ENCODE measurements at regions of chr10 and their contacts with region 1.

Region 1: DNA sequence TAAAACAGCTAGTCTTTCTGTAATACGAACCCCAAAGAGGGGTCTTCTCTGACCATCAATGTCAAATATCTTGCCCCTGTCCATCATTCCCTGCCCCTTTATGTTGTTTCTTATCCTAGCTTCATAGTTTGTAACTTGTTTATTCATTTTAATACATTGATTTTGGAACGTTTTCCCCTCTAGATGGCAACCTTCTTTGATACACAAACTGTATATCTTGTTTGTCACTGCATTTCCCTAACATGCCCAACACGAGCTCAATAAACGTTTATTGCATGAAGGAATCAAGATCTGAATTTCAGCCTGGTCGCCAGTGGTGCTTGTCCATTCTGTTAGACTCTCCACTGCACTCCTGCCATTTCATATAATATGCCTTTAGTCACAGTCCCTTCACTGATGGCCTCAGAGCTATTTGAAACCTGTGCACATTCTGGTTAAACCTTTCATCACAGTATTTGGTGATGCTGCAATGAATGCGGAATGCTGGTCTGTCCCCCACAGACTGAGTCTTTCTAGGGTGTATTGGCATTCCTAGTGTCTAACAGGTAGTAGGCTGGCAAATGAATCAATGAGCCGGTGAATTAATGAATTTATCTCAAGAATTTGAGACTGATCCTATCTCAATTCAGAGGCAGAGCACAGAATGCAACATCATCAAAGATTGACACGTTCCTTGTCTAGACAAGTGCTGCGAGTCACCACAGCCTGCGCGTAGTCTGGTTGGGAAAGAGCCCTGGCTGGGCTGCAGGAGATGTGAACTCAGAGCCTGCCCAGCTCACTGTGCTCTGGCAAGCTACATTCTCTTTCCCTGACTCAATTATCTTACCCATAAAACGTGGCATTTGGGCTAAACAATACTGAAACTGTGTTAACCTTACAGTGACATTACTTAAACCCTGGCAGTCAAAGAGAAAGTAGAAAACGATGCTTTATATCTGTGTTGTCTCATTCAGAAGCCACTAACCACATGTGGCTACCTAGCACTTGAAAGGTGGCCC is 55.2 kb upstream of the FRMD4A start:
- DNase-seq: peak; percentile 67
- H3K4me3 Mint-ChIP-seq: no peak overlapping the region
- H3K27ac Mint-ChIP-seq: no peak overlapping the region
- H3K4me1 Mint-ChIP-seq: peaks cover 80% of the 10 kb centered on the region
- H3K27me3 Mint-ChIP-seq: peaks cover 3% of the 10 kb centered on the region

Region 2: DNA sequence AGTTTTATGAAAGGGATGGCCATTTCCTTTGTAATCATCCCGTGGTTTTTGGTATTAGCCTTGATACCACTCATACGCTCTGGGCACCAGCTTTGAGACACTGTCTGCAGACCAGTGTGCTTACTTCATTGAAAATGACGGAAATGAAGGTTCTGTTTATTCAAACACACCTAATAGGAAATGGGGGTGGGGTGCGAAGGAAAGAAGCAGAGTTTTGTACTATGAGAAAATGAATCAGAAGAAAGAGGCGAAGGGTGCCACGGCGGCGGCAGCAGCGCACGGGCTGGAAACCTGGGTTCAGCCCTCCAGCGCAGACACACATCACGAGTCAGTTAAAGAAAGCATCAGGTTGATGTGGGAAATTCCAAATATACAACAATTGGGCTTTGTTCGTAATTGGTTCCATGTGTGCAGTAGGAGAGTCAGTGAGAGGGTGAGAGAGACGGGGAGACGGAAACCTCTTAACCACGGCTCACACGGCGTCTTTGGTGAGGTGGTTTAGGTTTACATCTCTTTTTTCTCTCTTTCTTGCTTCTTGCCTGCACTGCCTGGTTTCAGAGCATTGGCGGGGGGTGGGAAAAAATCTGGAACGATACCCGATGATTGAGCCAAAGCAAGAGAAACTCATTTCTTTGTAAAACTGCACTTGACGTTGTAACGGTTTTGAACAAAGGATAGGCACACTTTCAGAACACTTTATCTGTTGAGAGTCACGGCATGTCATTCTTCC is 376.4 kb before region 1 on chr10:
- CTCF ChIA-PET with region 1: no interaction called
- intact Hi-C with region 1: loop called (anchors 2 kb)
- DNase-seq: peak; percentile 84
- H3K4me3 Mint-ChIP-seq: peak overlapping the region; percentile 79
- H3K27ac Mint-ChIP-seq: peak overlapping the region; percentile 90
- H3K4me1 Mint-ChIP-seq: peaks cover 35% of the 10 kb centered on the region
- H3K27me3 Mint-ChIP-seq: no peaks in the 10 kb centered on the region

Region 3: DNA sequence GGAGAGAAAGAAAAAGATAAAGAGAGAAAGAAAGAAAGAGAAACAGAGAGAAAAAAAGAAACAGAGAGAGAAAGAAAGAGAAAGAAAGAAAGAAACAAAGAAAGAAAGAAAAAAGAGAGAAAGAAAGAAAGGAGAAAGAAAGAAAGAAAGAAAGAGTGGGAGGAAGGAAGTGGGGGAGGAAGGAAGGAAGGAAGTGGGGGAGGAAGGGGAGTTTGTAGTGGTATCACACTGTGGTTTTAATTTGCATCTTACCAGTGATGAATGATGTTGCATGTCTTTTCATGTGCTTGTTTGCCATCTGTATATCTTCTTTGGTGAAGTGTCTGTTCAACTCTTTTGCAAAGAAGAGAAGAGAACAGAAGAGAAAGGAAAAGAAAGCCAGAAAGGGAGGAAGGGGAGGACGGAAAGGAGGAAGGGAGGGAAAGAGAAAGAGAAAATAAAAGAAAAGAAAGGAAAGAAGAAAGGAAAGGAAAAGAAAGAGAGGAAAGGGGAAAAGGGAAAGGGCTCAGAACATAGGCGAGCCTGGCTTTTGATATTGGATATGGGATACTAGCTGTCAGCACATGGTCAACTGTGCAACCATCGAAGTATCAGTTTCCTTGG is 24.1 kb after region 1 on chr10:
- CTCF ChIA-PET with region 1: interaction called, 3 read pairs
- intact Hi-C with region 1: loop called (anchors 1 kb)
- DNase-seq: no peak
- H3K4me3 Mint-ChIP-seq: no peak overlapping the region
- H3K27ac Mint-ChIP-seq: peak overlapping the region; percentile 80
- H3K4me1 Mint-ChIP-seq: peaks cover 25% of the 10 kb centered on the region
- H3K27me3 Mint-ChIP-seq: peaks cover 30% of the 10 kb centered on the region

Region 4: DNA sequence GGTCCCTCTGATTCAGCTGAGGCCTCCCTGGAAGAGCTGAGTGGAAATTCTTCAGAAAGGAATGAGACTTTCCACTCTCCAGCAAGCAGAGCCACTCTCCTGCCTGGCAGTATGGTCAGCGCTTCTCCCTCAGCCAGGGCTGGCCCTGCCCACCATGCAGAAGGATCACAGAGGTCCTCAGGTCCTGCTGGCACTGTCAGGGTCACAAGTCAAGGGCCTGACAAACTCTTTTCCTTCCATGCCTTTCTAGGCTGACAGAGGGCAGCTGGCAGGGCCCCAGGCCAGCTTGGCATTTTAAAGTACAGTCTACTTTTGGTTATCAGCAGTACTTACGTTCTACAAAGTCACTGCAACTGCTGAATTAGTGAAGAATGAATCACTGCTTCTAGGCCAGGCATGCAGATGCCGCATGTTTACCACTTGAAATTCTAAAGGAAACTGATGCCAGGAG is 64.2 kb after region 1 on chr10:
- CTCF ChIA-PET with region 1: no interaction called
- intact Hi-C with region 1: no loop called
- DNase-seq: no peak
- H3K4me3 Mint-ChIP-seq: no peak overlapping the region
- H3K27ac Mint-ChIP-seq: no peak overlapping the region
- H3K4me1 Mint-ChIP-seq: no peaks in the 10 kb centered on the region
- H3K27me3 Mint-ChIP-seq: peaks cover 2% of the 10 kb centered on the region

Region 5: GRCh38 chr10:14665304-14665703 is 279.4 kb after region 1 on chr10:
- CTCF ChIA-PET with region 1: no interaction called
- intact Hi-C with region 1: loop called (anchors 1 kb)
- DNase-seq: peak; percentile 65
- H3K4me3 Mint-ChIP-seq: no peak overlapping the region
- H3K27ac Mint-ChIP-seq: peak overlapping the region; percentile 78
- H3K4me1 Mint-ChIP-seq: peaks cover 53% of the 10 kb centered on the region
- H3K27me3 Mint-ChIP-seq: no peaks in the 10 kb centered on the region

Region 6: DNA sequence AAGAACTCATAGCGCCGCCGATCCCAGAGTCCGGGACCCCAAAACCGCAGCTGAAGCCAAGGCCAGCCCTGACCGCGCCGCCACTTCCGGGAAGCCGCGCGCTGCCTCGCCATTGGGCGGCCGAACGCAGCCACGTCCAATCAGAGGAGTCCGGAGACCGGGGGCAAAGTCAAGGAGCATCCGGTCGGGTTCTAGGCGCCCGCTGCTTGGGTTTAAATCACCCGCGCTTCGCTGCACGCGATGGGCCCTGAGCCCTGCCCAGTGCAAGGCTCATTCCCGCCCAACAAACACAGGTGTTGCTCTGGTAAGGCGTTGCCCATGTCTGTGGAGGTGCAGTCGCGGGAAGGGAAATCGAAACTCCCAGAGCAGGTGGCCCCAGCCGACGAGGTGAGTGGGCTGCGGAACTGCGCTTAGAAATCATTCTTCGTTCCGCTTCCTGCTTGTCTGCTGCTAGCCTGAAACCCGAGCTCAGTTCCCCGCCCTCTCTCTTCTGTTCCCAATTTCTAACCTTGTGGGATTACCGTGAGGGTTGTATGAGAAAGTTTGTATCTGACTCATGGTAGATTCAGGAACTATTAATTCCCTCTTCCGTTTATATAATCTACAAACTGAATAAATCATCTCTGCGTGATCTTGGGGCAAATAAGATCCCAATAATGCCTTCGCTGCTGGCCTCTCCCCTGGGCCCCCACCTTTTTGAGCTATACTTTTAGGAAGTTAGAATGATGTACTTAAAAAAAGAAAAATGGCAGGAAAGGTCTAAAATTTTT is 568.3 kb after region 1 on chr10 and contains the start of gene DCLRE1C:
- CTCF ChIA-PET with region 1: no interaction called
- intact Hi-C with region 1: loop called (anchors 5 kb)
- DNase-seq: peak; percentile 91
- H3K4me3 Mint-ChIP-seq: peak within 1 kb of the TSS; percentile 90
- H3K27ac Mint-ChIP-seq: peak within 1 kb of the TSS; percentile 93
- H3K4me1 Mint-ChIP-seq: peaks cover 54% of the 10 kb centered on the region
- H3K27me3 Mint-ChIP-seq: no peaks in the 10 kb centered on the region
- total RNA-seq, gene DCLRE1C: 9.8 to 13.9 TPM

Measured in activated naive CD4-positive, alpha-beta T cell treated with anti-CD3 and anti-CD28 coated beads for 36 hours (primary cell).